Naive thymus-derived CD4-positive, alpha-beta T cell (primary cell): ENCODE measurements at regions of chr12 and their contacts with region 1.

Region 1: GRCh38 chr12:9786726-9787717 is 26.3 kb upstream of the CD69 start:
- DNase-seq: no peak
- ATAC-seq: no peak
- H3K4me3 ChIP-seq: no peak overlapping the region
- H3K4me3 Mint-ChIP-seq: no peak overlapping the region
- H3K27ac ChIP-seq: no peak overlapping the region
- H3K27ac Mint-ChIP-seq: peak overlapping the region in 1 of 9 donors; percentile 58
- H3K4me1 ChIP-seq: no peaks in the 10 kb centered on the region
- H3K4me1 Mint-ChIP-seq: peaks cover 11 to 35% (median 22%) of the 10 kb centered on the region in 7 donors
- H3K27me3 ChIP-seq: no peaks in the 10 kb centered on the region
- H3K27me3 Mint-ChIP-seq: no peaks in the 10 kb centered on the region

Region 2: DNA sequence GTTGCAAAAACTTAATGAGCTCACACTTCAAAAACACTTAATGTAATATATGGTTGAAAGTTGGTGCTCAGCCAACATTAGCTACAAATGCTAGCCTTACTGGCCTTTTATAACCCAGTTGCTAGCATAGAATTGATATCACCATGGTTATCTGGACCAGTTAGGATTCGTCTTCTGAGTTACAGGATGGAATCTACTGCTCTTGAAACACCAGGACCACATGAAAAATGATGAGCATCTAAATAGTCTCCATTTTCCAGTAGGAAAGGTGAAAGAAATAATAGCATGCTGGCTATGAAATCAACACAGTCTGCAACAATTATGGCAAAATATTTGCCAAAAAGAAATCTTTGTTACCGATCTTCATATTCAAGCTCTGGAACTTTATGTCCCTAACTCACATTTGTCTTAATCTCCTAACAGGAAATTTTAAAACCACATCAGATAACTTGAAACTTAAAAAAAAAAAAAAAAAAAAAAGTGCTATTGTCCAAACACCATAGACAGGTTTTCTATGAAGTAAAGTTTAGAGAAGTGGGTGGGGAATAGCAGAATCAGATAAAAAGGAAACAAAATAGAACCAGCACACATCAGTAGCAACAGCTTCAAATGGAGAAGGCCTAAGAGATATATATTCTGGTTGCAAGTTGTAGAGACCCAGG is 13.7 kb before region 1 on chr12:
- CTCF ChIA-PET with region 1: no interaction called
- POLR2A ChIA-PET with region 1: interaction called, 5 read pairs
- intact Hi-C with region 1: loop called in 1 of 2 experiments (anchors 1 kb)
- DNase-seq: peak in 4 of 9 donors; percentile 41 to 70 (median 63)
- ATAC-seq: peak; percentile 78
- H3K4me3 ChIP-seq: peak overlapping the region; percentile 29
- H3K4me3 Mint-ChIP-seq: peak overlapping the region; percentile 4 to 78 (median 70)
- H3K27ac ChIP-seq: no peak overlapping the region
- H3K27ac Mint-ChIP-seq: peak overlapping the region; percentile 36 to 87 (median 73)
- H3K4me1 ChIP-seq: peaks cover 40 to 46% of the 10 kb centered on the region in 2 donors
- H3K4me1 Mint-ChIP-seq: peaks cover 46 to 91% (median 81%) of the 10 kb centered on the region in 7 donors
- H3K27me3 ChIP-seq: no peaks in the 10 kb centered on the region
- H3K27me3 Mint-ChIP-seq: no peaks in the 10 kb centered on the region